Activated CD4-positive, alpha-beta T cell treated with anti-CD3 and anti-CD28 coated beads, Interleukin-2, amount 10 ng/mL, durations not matched to agents 7 days and 5 days (primary cell): ENCODE measurements at regions of chr5 and their contacts with region 1.

Region 1: DNA sequence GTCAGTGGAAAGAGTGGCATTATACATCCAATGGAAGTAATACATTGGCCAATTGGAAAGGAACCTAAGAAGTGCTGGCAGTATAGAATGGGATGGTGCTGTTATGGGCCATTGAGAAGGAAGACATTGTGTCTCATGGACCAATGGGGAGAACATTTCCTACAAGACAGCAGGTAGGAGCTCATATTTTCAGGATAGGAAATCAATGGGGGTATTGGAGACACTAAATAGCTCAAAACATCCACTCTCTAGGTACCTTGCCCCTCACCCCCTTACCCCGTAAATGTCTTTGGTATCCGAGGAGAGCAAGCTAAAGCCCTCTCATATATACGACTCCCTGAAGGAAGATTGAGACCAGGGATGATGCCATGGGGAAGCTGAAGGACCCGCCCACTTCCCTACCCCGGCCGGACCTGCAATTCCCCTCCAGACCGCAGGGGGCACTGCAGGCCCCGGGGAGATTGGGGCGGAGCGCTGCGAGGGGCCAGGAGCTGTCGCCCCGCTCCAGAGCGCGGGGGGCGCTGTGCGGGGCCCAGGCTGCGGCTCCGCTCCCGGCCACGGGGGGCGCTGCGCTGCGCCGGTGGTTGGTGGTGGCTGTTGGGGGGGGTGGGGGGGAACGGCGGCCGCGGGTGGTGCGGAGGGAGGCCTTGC is at the start of gene KDM3B:
- DNase-seq: peak; percentile 88
- H3K4me3 Mint-ChIP-seq: peak within 1 kb of the TSS; percentile 93
- H3K27ac Mint-ChIP-seq: peak within 1 kb of the TSS; percentile 98
- H3K4me1 Mint-ChIP-seq: peaks cover 47% of the 10 kb centered on the region
- H3K27me3 Mint-ChIP-seq: no peaks in the 10 kb centered on the region
- total RNA-seq, gene KDM3B: 60.4 to 65.7 TPM

Region 2: GRCh38 chr5:137995077-137995748 is 357.0 kb before region 1 on chr5:
- CTCF ChIA-PET with region 1: no interaction called
- POLR2A ChIA-PET with region 1: no interaction called
- DNase-seq: no peak
- H3K4me3 Mint-ChIP-seq: no peak overlapping the region
- H3K27ac Mint-ChIP-seq: no peak overlapping the region
- H3K4me1 Mint-ChIP-seq: peaks cover 26% of the 10 kb centered on the region
- H3K27me3 Mint-ChIP-seq: no peaks in the 10 kb centered on the region

Region 3: GRCh38 chr5:138138949-138139780 is 213.0 kb before region 1 on chr5 and contains the start of gene NME5:
- CTCF ChIA-PET with region 1: no interaction called
- POLR2A ChIA-PET with region 1: no interaction called
- DNase-seq: no peak
- H3K4me3 Mint-ChIP-seq: no peak within 1 kb of the TSS
- H3K27ac Mint-ChIP-seq: no peak within 1 kb of the TSS
- H3K4me1 Mint-ChIP-seq: peaks cover 6% of the 10 kb centered on the region
- H3K27me3 Mint-ChIP-seq: peaks cover 12% of the 10 kb centered on the region
- total RNA-seq, gene NME5: not detected

Region 4: DNA sequence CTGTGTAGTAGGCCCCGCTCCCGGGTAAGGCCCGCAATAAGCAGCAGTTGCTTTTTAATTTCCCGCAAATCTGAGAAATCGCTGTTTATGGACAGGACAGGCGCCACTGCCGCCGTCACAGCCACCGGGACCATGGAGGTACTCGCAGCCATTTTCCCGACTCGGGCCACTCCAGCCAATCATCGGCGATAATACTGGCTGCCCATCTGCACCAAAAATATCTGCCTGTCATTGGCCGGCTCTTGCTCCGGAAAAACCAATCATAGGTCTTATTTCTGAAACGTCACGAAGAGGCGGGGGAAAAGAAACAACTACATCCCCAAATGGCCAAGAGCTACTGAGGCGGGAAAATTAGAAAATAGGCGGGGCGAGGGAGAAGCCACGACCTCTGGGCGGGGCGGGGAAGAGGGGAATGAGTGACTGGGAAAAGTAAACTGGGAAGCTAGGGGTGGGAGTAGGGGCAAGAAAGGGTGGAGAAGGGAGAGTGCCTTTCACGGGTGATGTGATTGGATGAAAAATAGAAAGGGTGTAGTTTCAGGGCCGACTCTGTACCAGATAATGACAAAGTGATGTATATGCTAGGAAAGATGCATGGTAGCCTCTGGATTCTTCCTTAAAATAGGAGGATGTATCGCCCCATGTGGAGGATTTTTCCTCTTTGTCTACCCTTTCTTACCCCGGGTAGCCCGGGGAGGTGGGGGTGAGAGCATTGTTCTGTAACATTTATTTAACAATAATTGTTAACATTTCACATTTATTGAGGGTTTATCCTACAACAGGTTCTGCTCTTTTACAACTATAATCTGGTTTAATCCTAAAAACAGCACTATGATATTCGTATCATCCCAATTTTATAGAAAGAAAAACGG is 138.8 kb before region 1 on chr5 and contains the start of gene CDC23:
- CTCF ChIA-PET with region 1: interaction called, 15 read pairs
- POLR2A ChIA-PET with region 1: interaction called, 3 read pairs
- DNase-seq: peak; percentile 97
- H3K4me3 Mint-ChIP-seq: peak within 1 kb of the TSS; percentile 100
- H3K27ac Mint-ChIP-seq: peak within 1 kb of the TSS; percentile 98
- H3K4me1 Mint-ChIP-seq: peaks cover 26% of the 10 kb centered on the region
- H3K27me3 Mint-ChIP-seq: no peaks in the 10 kb centered on the region
- total RNA-seq, gene CDC23: 32.2 to 34.6 TPM

Region 5: GRCh38 chr5:138331449-138332368 is 20.5 kb before region 1 on chr5 and contains the start of gene CDC25C:
- CTCF ChIA-PET with region 1: interaction called, 444 read pairs
- POLR2A ChIA-PET with region 1: interaction called, 5 read pairs
- DNase-seq: peak; percentile 99
- H3K4me3 Mint-ChIP-seq: peak within 1 kb of the TSS; percentile 91
- H3K27ac Mint-ChIP-seq: peak within 1 kb of the TSS; percentile 90
- H3K4me1 Mint-ChIP-seq: peaks cover 31% of the 10 kb centered on the region
- H3K27me3 Mint-ChIP-seq: no peaks in the 10 kb centered on the region
- total RNA-seq, gene CDC25C: 15.8 to 19.0 TPM

Region 6: GRCh38 chr5:138386290-138386689 is 34.1 kb after region 1 on chr5:
- CTCF ChIA-PET with region 1: interaction called, 73 read pairs
- POLR2A ChIA-PET with region 1: no interaction called
- DNase-seq: no peak
- H3K4me3 Mint-ChIP-seq: no peak overlapping the region
- H3K27ac Mint-ChIP-seq: no peak overlapping the region
- H3K4me1 Mint-ChIP-seq: no peaks in the 10 kb centered on the region
- H3K27me3 Mint-ChIP-seq: no peaks in the 10 kb centered on the region

Region 7: GRCh38 chr5:138418444-138418843 is 66.2 kb after region 1 on chr5:
- CTCF ChIA-PET with region 1: interaction called, 17 read pairs
- POLR2A ChIA-PET with region 1: no interaction called
- DNase-seq: no peak
- H3K4me3 Mint-ChIP-seq: no peak overlapping the region
- H3K27ac Mint-ChIP-seq: no peak overlapping the region
- H3K4me1 Mint-ChIP-seq: peaks cover 8% of the 10 kb centered on the region
- H3K27me3 Mint-ChIP-seq: no peaks in the 10 kb centered on the region

Region 8: GRCh38 chr5:138575194-138576015 is 223.2 kb after region 1 on chr5 and contains the start of gene HSPA9:
- CTCF ChIA-PET with region 1: interaction called, 11 read pairs
- POLR2A ChIA-PET with region 1: no interaction called
- DNase-seq: peak; percentile 98
- H3K4me3 Mint-ChIP-seq: peak within 1 kb of the TSS; percentile 98
- H3K27ac Mint-ChIP-seq: peak within 1 kb of the TSS; percentile 100
- H3K4me1 Mint-ChIP-seq: peaks cover 41% of the 10 kb centered on the region
- H3K27me3 Mint-ChIP-seq: no peaks in the 10 kb centered on the region
- total RNA-seq, gene HSPA9: 168 to 171 TPM